Activated naive CD4-positive, alpha-beta T cell treated with anti-CD3 and anti-CD28 coated beads, Interleukin-2, amount 10 ng/mL, durations not matched to agents 7 days and 5 days (primary cell): ENCODE measurements at regions of chr21 and their contacts with region 1.

Region 1: GRCh38 chr21:36141513-36141925 is 6.6 kb downstream of the CBR3 start:
- DNase-seq: peak; percentile 94
- H3K4me3 Mint-ChIP-seq: no peak overlapping the region
- H3K27ac Mint-ChIP-seq: peak overlapping the region; percentile 86
- H3K4me1 Mint-ChIP-seq: peaks cover 63% of the 10 kb centered on the region
- H3K27me3 Mint-ChIP-seq: peaks cover 3% of the 10 kb centered on the region

Region 2: GRCh38 chr21:36156339-36156814 is 14.9 kb after region 1 on chr21:
- CTCF ChIA-PET with region 1: interaction called, 13 read pairs
- DNase-seq: peak; percentile 100
- H3K4me3 Mint-ChIP-seq: peak overlapping the region; percentile 78
- H3K27ac Mint-ChIP-seq: peak overlapping the region; percentile 60
- H3K4me1 Mint-ChIP-seq: peaks cover 46% of the 10 kb centered on the region
- H3K27me3 Mint-ChIP-seq: peaks cover 11% of the 10 kb centered on the region

Region 3: DNA sequence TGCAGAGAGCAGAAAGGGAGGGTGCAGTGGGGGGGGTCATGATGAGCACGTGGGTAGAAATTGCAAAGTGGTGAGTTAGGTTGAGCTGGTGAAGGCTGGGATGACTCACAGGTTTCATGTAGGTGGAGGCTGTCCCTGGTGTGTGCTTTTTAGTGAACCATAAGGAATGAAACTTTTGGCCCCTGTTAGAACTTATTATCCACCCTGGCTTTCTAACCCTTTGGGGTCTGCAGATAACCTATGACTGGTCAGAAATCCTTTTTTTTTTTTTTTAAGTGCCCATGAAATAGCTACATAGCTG is 62.0 kb after region 1 on chr21:
- CTCF ChIA-PET with region 1: interaction called, 47 read pairs
- DNase-seq: peak; percentile 55
- H3K4me3 Mint-ChIP-seq: no peak overlapping the region
- H3K27ac Mint-ChIP-seq: no peak overlapping the region
- H3K4me1 Mint-ChIP-seq: peaks cover 30% of the 10 kb centered on the region
- H3K27me3 Mint-ChIP-seq: no peaks in the 10 kb centered on the region

Region 4: GRCh38 chr21:36209626-36210171 is 68.2 kb after region 1 on chr21:
- CTCF ChIA-PET with region 1: interaction called, 47 read pairs
- DNase-seq: peak; percentile 75
- H3K4me3 Mint-ChIP-seq: no peak overlapping the region
- H3K27ac Mint-ChIP-seq: peak overlapping the region; percentile 29
- H3K4me1 Mint-ChIP-seq: peaks cover 22% of the 10 kb centered on the region
- H3K27me3 Mint-ChIP-seq: no peaks in the 10 kb centered on the region